ENCODE measurements at regions of chr4 and their contacts with region 1.

Region 1: GRCh38 chr4:32290102-32290501 is 1569.9 kb downstream of the PCDH7 start:
- DNase-seq: no peak
- ATAC-seq: no peak
- H3K4me3 ChIP-seq: no peak overlapping the region
- H3K4me3 Mint-ChIP-seq: no peak overlapping the region
- H3K27ac ChIP-seq: no peak overlapping the region
- H3K27ac Mint-ChIP-seq: no peak overlapping the region
- H3K4me1 ChIP-seq: no peaks in the 10 kb centered on the region
- H3K4me1 Mint-ChIP-seq: no peaks in the 10 kb centered on the region
- H3K27me3 ChIP-seq: no peaks in the 10 kb centered on the region
- H3K27me3 Mint-ChIP-seq: no peaks in the 10 kb centered on the region
- CTCF ChIP-seq: no peak

Region 2: GRCh38 chr4:31370866-31371465 is 919.1 kb before region 1 on chr4:
- CTCF ChIA-PET with region 1: no interaction called
- POLR2A ChIA-PET with region 1: no interaction called
- intact Hi-C with region 1: no loop called
- DNase-seq: peak in 3 of 14 experiments; percentile 5 to 11 (median 10)
- ATAC-seq: no peak
- H3K4me3 ChIP-seq: no peak overlapping the region
- H3K4me3 Mint-ChIP-seq: no peak overlapping the region
- H3K27ac ChIP-seq: no peak overlapping the region
- H3K27ac Mint-ChIP-seq: no peak overlapping the region
- H3K4me1 ChIP-seq: no peaks in the 10 kb centered on the region
- H3K4me1 Mint-ChIP-seq: no peaks in the 10 kb centered on the region
- H3K27me3 ChIP-seq: no peaks in the 10 kb centered on the region
- H3K27me3 Mint-ChIP-seq: no peaks in the 10 kb centered on the region
- CTCF ChIP-seq: peak; percentile 54

Region 3: GRCh38 chr4:32349026-32349425 is 58.9 kb after region 1 on chr4:
- CTCF ChIA-PET with region 1: no interaction called
- POLR2A ChIA-PET with region 1: no interaction called
- intact Hi-C with region 1: loop called in 1 of 2 experiments (anchors 5 kb)
- DNase-seq: no peak
- ATAC-seq: no peak
- H3K4me3 ChIP-seq: no peak overlapping the region
- H3K4me3 Mint-ChIP-seq: no peak overlapping the region
- H3K27ac ChIP-seq: no peak overlapping the region
- H3K27ac Mint-ChIP-seq: no peak overlapping the region
- H3K4me1 ChIP-seq: no peaks in the 10 kb centered on the region
- H3K4me1 Mint-ChIP-seq: no peaks in the 10 kb centered on the region
- H3K27me3 ChIP-seq: no peaks in the 10 kb centered on the region
- H3K27me3 Mint-ChIP-seq: no peaks in the 10 kb centered on the region
- CTCF ChIP-seq: no peak